ENCODE measurements at regions of chr2 and their contacts with region 1.

Region 1: DNA sequence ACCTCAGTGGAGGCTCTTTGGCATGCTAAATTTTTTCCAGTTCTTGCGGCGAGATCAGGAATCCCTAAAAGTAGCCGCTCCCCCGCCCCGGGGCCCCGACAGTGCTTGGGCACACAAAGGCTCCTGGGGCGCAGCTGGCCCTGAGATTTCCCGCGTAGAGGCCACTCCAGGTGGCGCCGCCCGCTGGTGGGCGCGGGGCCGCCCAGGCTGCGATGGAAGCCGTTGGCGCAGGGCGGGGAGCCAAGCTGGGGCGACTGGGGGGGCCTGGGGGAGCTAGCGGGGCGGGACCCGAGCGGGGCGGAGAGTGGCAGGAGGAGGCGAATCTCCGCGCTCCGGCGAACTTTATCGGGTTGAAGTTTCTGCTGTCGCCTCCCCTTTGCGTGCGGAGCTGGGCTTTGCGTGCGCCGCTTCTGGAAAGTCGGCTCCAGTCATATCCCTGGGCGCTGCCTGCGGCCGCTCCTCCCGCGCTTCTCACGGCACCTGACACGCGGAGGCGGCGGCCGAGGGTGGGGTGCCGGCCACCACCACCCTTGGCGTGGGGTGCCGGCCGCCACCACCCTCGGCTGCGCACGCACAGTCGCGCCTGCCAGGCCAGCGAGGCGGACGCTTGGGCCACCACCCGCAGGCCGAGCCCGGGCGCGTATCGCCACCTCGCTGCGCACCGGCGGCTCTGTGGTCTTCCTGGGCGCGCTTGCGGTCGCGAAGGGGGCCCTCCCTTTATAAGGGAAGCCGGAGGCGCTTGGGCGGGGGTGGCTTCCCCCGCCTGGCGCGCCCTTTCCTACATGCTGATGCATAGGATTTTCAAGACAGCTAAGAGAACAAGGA is 867 bp upstream of the CYP1B1 start:
- DNase-seq: peak; percentile 95
- H3K4me3 Mint-ChIP-seq: peak overlapping the region; percentile 78
- H3K27ac Mint-ChIP-seq: peak overlapping the region; percentile 75
- H3K4me1 Mint-ChIP-seq: peaks cover 20% of the 10 kb centered on the region
- H3K27me3 Mint-ChIP-seq: no peaks in the 10 kb centered on the region
- CTCF ChIP-seq: no peak

Region 2: DNA sequence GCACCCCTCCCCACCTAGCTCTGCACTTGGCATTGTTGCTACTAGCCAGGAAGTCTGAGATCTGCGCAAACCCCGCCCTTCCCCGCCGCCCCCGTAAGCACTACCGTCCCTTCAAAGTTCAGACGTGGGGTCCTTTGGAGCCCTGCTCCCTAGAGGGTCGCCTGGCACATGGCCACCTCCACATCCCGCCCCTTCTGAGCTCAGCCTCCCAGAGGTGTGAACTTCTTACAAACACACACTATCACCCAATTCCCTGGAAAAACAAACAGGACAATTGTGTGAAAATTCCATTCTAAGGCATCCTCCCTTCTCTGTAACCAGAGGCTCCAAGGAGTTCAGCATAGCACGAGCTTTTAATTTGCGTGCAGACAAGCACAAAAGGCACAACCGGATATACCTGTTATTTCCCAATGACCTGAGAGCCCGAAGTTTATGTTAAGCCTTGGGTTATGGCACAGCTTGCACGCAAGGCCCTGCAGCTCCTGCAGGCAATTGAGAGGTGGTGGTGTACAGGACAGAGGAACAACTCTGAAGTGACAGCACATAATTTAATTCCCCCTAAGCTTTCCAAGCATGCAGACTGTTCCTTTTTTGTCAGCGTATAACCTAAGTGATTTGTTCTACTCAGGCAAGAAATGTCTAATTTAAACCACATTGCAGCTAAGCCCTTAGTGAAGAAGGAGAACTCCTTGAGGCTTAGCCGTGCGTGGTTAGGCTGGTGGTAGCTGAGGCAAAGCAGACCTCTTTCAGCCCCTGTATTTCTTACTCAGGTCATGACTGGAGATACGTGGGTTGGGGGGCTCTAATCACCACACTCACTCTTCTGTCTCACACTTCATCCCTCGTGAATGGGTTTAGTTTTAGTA is 19.4 kb after region 1 on chr2:
- CTCF ChIA-PET with region 1: interaction called, 15 read pairs
- POLR2A ChIA-PET with region 1: interaction called, 100 read pairs
- intact Hi-C with region 1: loop called (anchors 2 kb)
- DNase-seq: peak; percentile 96
- H3K4me3 Mint-ChIP-seq: no peak overlapping the region
- H3K27ac Mint-ChIP-seq: peak overlapping the region; percentile 79
- H3K4me1 Mint-ChIP-seq: peaks cover 54% of the 10 kb centered on the region
- H3K27me3 Mint-ChIP-seq: no peaks in the 10 kb centered on the region
- CTCF ChIP-seq: no peak

Region 3: GRCh38 chr2:38115216-38116032 is 38.6 kb after region 1 on chr2:
- CTCF ChIA-PET with region 1: interaction called, 12 read pairs
- POLR2A ChIA-PET with region 1: interaction called, 29 read pairs
- intact Hi-C with region 1: loop called (anchors 1 kb)
- DNase-seq: peak; percentile 94
- H3K4me3 Mint-ChIP-seq: no peak overlapping the region
- H3K27ac Mint-ChIP-seq: no peak overlapping the region
- H3K4me1 Mint-ChIP-seq: peaks cover 28% of the 10 kb centered on the region
- H3K27me3 Mint-ChIP-seq: no peaks in the 10 kb centered on the region
- CTCF ChIP-seq: peak; percentile 96

Region 4: DNA sequence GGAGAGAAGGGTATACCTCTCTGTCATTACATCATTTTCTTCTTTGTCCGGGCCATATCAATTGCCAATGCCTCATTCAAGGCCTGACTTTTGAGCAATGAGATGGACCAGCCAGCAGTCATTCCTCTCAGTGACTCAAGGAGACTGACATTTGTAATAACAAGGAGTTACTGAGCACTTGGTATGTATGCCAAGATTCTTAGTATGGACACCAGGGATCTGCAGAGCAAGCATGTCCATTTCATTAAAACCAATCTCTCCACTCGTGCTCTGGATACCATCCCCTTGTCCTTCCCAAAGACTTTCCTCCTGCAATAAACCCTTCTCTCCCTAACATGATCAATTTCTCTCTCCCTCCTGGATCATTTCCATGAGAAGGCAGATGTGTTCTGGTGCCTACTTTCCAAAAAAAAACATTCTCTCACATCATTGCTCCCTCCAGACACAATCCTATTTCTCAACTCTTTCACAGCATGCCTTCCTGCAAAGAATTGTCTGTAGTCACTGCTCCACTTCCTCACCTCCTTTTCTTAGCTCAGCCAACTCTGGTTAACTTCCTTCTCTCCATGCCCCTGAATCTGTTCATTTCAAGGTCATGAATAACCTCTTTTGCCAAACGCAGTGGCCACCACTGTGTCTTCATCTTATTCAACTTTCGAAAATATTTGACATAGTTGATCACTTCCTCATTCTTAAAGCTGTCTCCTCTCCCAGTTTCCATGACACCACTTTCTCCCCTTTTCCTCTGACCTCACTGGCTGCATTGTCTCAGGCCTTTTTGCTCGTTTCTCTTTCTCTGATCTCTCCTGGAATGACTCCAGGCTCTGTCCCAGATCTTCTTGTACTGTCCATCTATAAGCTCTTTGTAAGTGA is 102.0 kb after region 1 on chr2:
- CTCF ChIA-PET with region 1: interaction called, 4 read pairs
- POLR2A ChIA-PET with region 1: interaction called, 12 read pairs
- intact Hi-C with region 1: loop called (anchors 5 kb)
- DNase-seq: peak; percentile 83
- H3K4me3 Mint-ChIP-seq: peak overlapping the region; percentile 12
- H3K27ac Mint-ChIP-seq: peak overlapping the region; percentile 60
- H3K4me1 Mint-ChIP-seq: peaks cover 48% of the 10 kb centered on the region
- H3K27me3 Mint-ChIP-seq: no peaks in the 10 kb centered on the region
- CTCF ChIP-seq: no peak

Region 5: DNA sequence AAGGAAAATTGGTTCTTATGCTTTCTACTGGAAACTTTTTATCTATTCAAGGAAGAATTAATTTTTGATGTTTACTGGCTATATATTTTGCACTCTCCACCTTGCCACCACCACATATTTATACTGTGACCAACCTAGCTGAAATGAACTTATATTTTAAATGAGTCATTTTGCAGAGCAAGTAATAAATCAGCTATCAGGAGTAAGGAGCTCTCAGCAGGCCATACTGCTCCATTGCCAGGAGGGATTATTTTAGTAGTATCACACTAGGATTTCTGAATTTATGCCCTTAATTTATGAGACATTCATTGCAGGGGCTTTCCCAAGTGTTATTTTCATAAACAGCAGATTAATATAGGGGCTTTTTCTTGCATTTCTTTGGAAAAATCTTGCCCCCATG is 125.0 kb after region 1 on chr2:
- CTCF ChIA-PET with region 1: no interaction called
- POLR2A ChIA-PET with region 1: no interaction called
- intact Hi-C with region 1: no loop called
- DNase-seq: no peak
- H3K4me3 Mint-ChIP-seq: no peak overlapping the region
- H3K27ac Mint-ChIP-seq: no peak overlapping the region
- H3K4me1 Mint-ChIP-seq: peaks cover 6% of the 10 kb centered on the region
- H3K27me3 Mint-ChIP-seq: no peaks in the 10 kb centered on the region
- CTCF ChIP-seq: no peak

Region 6: DNA sequence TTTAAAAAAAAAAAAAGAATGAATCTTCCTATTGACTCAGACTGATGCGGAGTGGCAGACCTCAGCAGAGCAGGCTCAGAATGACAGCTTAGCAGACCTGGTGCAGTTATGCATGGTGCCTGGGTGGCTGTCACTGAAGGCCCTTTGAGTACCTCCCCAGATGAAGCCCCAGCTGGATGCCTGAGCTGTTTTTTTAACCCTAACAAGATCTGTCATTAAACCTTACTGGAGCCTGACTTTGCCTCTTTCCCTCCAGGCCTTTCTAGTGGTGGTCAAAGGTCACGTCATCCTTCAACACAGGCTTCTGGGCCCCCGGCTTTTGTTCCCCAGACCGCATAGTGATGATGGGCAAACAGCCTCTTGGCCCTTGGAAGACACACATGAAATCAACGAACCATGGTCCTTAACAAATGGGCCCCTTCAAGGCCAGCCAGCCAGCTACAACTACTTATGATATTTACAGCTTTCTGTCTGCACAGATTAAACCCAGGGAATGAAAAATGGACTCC is 137.4 kb after region 1 on chr2:
- CTCF ChIA-PET with region 1: no interaction called
- POLR2A ChIA-PET with region 1: no interaction called
- intact Hi-C with region 1: no loop called
- DNase-seq: no peak
- H3K4me3 Mint-ChIP-seq: no peak overlapping the region
- H3K27ac Mint-ChIP-seq: peak overlapping the region; percentile 74
- H3K4me1 Mint-ChIP-seq: peaks cover 44% of the 10 kb centered on the region
- H3K27me3 Mint-ChIP-seq: no peaks in the 10 kb centered on the region
- CTCF ChIP-seq: no peak

Region 7: DNA sequence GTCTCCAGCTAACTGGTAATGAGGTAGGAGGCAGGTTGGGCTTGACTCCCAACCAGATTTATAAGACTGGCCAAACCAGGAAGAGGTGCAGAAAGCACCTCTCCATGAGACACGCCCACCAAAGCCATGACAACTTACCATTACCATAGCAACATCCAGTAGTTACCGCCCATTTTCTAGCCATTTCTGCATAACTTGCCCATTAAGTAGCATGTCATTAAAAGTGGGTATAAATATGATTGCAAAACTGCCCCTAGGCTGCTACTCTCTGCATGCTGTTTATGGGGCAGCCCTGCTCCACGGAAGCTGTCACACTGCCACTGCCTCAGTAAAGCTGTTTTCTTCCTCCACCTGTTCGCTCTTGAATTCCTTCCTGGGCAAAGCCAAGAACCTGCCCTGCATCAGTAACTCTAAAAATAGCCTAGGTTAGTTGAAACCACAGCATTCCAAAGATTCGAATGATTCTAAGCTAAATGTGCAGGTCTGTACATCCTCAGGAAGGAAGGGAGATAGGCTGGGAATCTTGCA is 168.4 kb after region 1 on chr2:
- CTCF ChIA-PET with region 1: interaction called, 10 read pairs
- POLR2A ChIA-PET with region 1: interaction called, 8 read pairs
- intact Hi-C with region 1: no loop called
- DNase-seq: peak; percentile 39
- H3K4me3 Mint-ChIP-seq: no peak overlapping the region
- H3K27ac Mint-ChIP-seq: peak overlapping the region; percentile 14
- H3K4me1 Mint-ChIP-seq: peaks cover 20% of the 10 kb centered on the region
- H3K27me3 Mint-ChIP-seq: no peaks in the 10 kb centered on the region
- CTCF ChIP-seq: no peak

Measured in MCF 10A (cell line).